Activated CD4-positive, alpha-beta T cell treated with anti-CD3 and anti-CD28 coated beads, Interleukin-2, amount 10 ng/mL, durations not matched to agents 24 days and 14 days (primary cell): ENCODE measurements at regions of chr9 and their contacts with region 1.

Region 1: GRCh38 chr9:127734747-127735529 is at the start of gene TOR2A:
- DNase-seq: peak; percentile 100
- H3K4me3 Mint-ChIP-seq: peak within 1 kb of the TSS; percentile 89
- H3K27ac Mint-ChIP-seq: peak within 1 kb of the TSS; percentile 94
- H3K4me1 Mint-ChIP-seq: peaks cover 10% of the 10 kb centered on the region
- H3K27me3 Mint-ChIP-seq: no peaks in the 10 kb centered on the region
- total RNA-seq, gene TOR2A: 20.4 and 21.4 TPM in 2 replicates

Region 2: DNA sequence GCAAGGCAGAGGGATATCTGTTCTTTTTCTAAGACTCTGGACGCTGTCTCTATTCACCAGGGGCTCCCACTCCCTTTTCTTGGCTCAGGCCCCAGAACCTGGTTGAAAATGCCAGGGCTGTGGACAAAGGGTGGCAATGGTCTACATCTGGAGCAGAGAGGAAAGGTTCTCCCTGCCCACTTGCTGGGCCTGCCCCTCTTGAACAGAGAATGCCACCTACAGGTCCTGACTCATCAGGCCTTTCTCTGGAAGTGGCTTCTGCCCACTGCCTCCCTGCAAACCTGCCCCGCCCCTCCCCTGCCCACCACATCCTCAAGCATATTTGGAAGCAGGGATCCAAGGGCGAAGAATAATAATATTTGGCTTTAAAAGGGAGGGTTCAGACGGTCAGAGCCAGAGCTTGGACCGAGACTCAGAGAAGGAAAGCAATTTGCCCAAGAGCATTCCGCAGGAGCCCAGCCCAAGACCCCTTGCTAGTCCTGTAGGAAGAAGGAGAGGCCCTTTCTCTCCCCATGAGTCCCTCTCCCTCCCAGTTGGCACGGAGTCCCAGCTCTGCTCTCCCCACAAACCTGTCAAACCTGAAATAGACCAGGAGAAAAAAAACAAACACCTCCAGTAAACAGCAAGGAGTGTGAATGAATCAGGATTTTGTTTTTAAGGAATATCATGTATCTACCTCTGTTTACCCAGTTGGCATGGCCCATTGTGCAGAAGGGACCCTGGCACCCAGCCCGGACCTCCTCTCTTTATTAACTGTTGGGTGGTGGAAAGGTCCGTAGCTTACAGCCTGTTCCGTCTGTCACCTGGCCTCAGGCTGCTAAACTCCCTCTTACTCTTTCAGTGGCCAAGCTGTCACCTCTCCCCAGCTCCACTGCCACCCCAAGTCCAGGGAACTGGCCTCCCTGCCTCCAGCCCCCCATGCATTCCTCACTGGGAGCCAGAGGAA is 160.6 kb before region 1 on chr9:
- intact Hi-C with region 1: no loop called
- DNase-seq: no peak
- H3K4me3 Mint-ChIP-seq: peak overlapping the region; percentile 77
- H3K27ac Mint-ChIP-seq: peak overlapping the region; percentile 88
- H3K4me1 Mint-ChIP-seq: peaks cover 61% of the 10 kb centered on the region
- H3K27me3 Mint-ChIP-seq: no peaks in the 10 kb centered on the region

Region 3: GRCh38 chr9:127586537-127586936 is 148.4 kb before region 1 on chr9:
- intact Hi-C with region 1: loop called (anchors 1 kb)
- DNase-seq: peak; percentile 89
- H3K4me3 Mint-ChIP-seq: no peak overlapping the region
- H3K27ac Mint-ChIP-seq: no peak overlapping the region
- H3K4me1 Mint-ChIP-seq: peaks cover 13% of the 10 kb centered on the region
- H3K27me3 Mint-ChIP-seq: peaks cover 23% of the 10 kb centered on the region

Region 4: DNA sequence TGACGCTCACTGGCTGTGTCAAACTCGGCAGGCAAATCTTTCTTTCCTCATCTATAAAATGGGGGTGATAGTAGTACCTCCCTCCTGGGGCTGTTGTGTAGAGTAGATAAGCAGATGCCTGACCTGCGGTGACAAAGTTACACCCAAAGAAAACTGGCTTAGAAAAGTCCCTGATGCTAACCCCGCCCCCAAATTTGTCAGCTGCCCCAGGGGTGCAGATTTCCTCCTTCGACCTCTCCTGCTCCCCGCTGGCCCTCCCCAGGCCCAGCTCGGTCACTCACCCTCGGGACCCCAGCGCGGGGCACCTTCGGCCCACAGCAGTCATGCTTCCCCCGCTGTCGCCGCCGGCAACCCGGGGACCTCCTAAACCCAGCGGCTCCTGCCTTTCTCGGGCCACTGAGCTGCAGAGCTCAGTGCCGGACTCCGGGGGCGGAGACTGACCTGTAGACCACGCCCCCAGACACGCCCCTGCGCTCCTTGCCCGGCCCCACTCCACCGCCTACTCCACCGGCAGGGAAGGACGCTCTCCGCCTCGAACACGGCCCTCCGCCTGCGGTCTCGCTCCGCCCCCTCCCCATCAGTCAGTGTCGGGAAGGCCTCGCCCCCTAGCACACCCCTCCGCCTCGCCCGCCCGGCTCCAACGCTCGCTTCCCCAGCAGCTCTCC is 36.1 kb after region 1 on chr9:
- intact Hi-C with region 1: loop called (anchors 1 kb)
- DNase-seq: peak; percentile 99
- H3K4me3 Mint-ChIP-seq: peak overlapping the region; percentile 93
- H3K27ac Mint-ChIP-seq: peak overlapping the region; percentile 94
- H3K4me1 Mint-ChIP-seq: peaks cover 58% of the 10 kb centered on the region
- H3K27me3 Mint-ChIP-seq: no peaks in the 10 kb centered on the region

Region 5: GRCh38 chr9:127802576-127803443 is 67.9 kb after region 1 on chr9 and contains the start of gene FPGS:
- intact Hi-C with region 1: loop called (anchors 1 kb)
- DNase-seq: peak; percentile 94
- H3K4me3 Mint-ChIP-seq: peak within 1 kb of the TSS; percentile 99
- H3K27ac Mint-ChIP-seq: peak within 1 kb of the TSS; percentile 97
- H3K4me1 Mint-ChIP-seq: peaks cover 25% of the 10 kb centered on the region
- H3K27me3 Mint-ChIP-seq: no peaks in the 10 kb centered on the region
- total RNA-seq, gene FPGS: 126 and 128 TPM in 2 replicates

Region 6: GRCh38 chr9:127916665-127917613 is 182.0 kb after region 1 on chr9 and contains the start of gene ST6GALNAC4:
- intact Hi-C with region 1: loop called (anchors 1 kb)
- DNase-seq: peak; percentile 98
- H3K4me3 Mint-ChIP-seq: peak within 1 kb of the TSS; percentile 86
- H3K27ac Mint-ChIP-seq: peak within 1 kb of the TSS; percentile 87
- H3K4me1 Mint-ChIP-seq: peaks cover 44% of the 10 kb centered on the region
- H3K27me3 Mint-ChIP-seq: peaks cover under 1% of the 10 kb centered on the region
- total RNA-seq, gene ST6GALNAC4: 28.0 and 28.3 TPM in 2 replicates